Calu3 (cell line): ENCODE measurements at regions of chr3 and their contacts with region 1.

Region 1: DNA sequence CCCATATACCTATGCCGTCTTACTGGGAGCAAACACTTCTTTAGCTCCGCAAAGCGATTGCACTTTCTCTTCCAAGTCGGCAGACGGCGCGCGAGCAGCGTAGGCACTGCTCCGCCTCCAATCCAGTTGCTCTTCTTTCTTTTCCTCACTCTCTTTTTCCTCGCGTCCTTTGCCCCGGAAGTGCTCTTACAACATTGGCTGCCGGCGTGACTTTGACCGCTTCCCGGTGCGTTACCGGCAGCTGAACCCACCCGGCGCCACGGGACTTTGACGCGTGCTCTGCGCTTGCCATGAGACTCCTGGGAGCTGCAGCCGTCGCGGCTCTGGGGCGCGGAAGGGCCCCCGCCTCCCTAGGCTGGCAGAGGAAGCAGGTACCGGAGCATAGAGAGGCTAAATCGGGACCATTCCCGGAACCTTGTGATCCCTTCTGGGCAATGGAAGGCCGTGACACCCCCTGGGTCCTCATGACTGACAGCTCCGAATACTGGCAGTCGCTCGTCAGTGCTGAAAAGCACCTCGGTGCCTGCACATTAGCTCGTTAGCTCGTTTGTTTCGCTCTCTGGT is at the start of gene GFM1:
- DNase-seq: peak; percentile 95
- H3K4me3 Mint-ChIP-seq: peak within 1 kb of the TSS; percentile 74
- H3K27ac Mint-ChIP-seq: peak within 1 kb of the TSS; percentile 42
- H3K4me1 Mint-ChIP-seq: peaks cover 11% of the 10 kb centered on the region
- H3K27me3 Mint-ChIP-seq: no peaks in the 10 kb centered on the region
- CTCF ChIP-seq: peak; percentile 90
- total RNA-seq, gene GFM1: 77.3 and 77.9 TPM in 2 replicates

Region 2: GRCh38 chr3:158539414-158540014 is 104.9 kb before region 1 on chr3:
- CTCF ChIA-PET with region 1: no interaction called
- intact Hi-C with region 1: loop called (anchors 5 kb)
- DNase-seq: peak; percentile 70
- H3K4me3 Mint-ChIP-seq: no peak overlapping the region
- H3K27ac Mint-ChIP-seq: no peak overlapping the region
- H3K4me1 Mint-ChIP-seq: no peaks in the 10 kb centered on the region
- H3K27me3 Mint-ChIP-seq: no peaks in the 10 kb centered on the region
- CTCF ChIP-seq: peak; percentile 55

Region 3: DNA sequence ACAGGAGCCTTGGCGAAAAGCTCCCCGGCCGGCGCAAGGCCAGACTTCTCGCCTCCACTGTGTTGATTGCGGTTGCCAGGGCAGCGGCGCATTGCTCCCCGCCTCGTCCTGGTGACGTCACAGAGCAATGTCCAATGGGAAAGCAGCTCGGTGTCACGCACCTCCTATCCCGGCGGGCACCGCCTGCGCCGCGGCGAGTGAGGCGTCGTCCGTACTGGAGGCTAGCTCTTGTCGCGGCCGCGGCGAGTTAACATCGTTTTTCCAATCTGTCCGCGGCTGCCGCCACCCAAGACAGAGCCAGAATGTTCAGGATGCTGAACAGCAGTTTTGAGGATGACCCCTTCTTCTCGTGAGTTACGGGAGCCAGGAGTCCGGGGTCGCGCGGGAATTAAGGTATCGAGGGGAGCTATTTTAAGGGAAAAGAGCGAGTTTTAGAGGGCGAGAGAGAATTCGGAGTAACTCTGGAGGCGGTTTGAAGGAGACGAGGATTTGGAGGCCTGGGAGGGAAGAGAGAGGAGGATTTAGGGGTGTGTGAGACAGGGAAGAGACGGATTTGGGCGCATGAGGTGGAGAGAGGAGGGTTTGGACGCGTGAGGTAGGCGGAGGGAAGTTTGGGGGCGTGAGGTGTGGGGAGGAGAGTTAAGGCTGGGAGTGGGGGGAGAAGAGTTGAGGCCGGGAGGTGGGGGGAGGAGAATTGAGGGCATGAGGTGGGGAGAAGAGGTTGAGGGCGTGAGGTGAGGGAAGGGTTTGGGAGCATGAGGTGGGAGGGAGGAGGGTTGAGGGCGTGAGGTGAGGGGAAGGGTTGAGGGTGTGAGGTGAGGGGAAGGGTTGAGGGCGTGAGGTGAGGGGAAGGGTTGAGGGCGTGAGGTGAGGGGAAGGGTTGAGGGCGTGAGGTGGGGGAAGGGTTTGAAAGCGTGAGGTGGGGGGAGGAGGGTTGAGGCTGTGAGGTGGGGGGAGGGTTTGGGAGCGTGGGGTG is 73.1 kb before region 1 on chr3 and contains the start of gene MLF1:
- CTCF ChIA-PET with region 1: interaction called, 12 read pairs
- intact Hi-C with region 1: no loop called
- DNase-seq: peak; percentile 100
- H3K4me3 Mint-ChIP-seq: peak within 1 kb of the TSS; percentile 83
- H3K27ac Mint-ChIP-seq: peak within 1 kb of the TSS; percentile 93
- H3K4me1 Mint-ChIP-seq: peaks cover 13% of the 10 kb centered on the region
- H3K27me3 Mint-ChIP-seq: no peaks in the 10 kb centered on the region
- CTCF ChIP-seq: no peak
- total RNA-seq, gene MLF1: 53.0 and 53.1 TPM in 2 replicates

Region 4: DNA sequence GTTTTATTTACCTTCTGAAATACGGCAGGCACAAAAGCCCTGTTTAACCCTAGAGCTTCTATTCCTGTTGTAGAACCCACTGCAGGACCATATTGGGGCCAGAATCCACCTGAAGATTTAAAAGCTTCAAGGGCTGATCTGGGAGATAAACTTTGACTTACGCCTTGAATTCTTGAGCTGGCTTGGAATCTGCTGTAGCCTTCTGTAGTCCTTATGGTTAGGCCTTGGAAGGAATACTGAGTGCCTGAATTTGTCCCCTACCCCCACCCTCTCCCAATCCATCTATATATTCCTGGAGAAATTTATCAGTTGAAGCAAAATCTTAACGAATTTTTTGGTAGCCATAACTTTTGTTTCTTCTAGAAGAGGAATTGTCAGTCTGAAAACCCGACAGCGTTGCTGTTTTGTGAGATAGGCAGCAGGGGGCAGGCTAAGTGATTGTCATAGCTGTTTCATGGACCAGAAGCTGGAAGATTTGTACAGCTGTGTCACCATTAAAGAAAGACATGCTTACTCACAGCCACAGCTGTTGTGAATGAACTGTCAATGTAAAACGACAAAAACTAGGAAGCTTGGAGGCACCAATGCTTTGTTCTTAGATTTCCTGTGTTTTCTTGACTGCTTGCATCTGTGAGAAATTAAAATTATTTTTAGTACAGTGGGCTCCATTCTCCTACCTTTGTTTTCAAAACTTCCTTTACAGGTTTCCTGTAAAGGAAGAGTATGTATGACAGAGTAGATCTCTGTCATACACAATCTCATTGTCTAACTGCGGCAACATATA is 15.2 kb after region 1 on chr3:
- CTCF ChIA-PET with region 1: interaction called, 11 read pairs
- intact Hi-C with region 1: no loop called
- DNase-seq: peak; percentile 72
- H3K4me3 Mint-ChIP-seq: no peak overlapping the region
- H3K27ac Mint-ChIP-seq: no peak overlapping the region
- H3K4me1 Mint-ChIP-seq: peaks cover 25% of the 10 kb centered on the region
- H3K27me3 Mint-ChIP-seq: no peaks in the 10 kb centered on the region
- CTCF ChIP-seq: peak; percentile 86

Region 5: GRCh38 chr3:159273608-159274007 is 629.2 kb after region 1 on chr3:
- CTCF ChIA-PET with region 1: no interaction called
- intact Hi-C with region 1: no loop called
- DNase-seq: peak; percentile 76
- H3K4me3 Mint-ChIP-seq: no peak overlapping the region
- H3K27ac Mint-ChIP-seq: no peak overlapping the region
- H3K4me1 Mint-ChIP-seq: no peaks in the 10 kb centered on the region
- H3K27me3 Mint-ChIP-seq: peaks cover 24% of the 10 kb centered on the region
- CTCF ChIP-seq: no peak

Region 6: GRCh38 chr3:159560214-159560979 is 916.0 kb after region 1 on chr3:
- CTCF ChIA-PET with region 1: interaction called, 12 read pairs
- intact Hi-C with region 1: no loop called
- DNase-seq: no peak
- H3K4me3 Mint-ChIP-seq: no peak overlapping the region
- H3K27ac Mint-ChIP-seq: no peak overlapping the region
- H3K4me1 Mint-ChIP-seq: no peaks in the 10 kb centered on the region
- H3K27me3 Mint-ChIP-seq: no peaks in the 10 kb centered on the region
- CTCF ChIP-seq: no peak